ENCODE measurements at regions of chr12 and their contacts with region 1.

Region 1: DNA sequence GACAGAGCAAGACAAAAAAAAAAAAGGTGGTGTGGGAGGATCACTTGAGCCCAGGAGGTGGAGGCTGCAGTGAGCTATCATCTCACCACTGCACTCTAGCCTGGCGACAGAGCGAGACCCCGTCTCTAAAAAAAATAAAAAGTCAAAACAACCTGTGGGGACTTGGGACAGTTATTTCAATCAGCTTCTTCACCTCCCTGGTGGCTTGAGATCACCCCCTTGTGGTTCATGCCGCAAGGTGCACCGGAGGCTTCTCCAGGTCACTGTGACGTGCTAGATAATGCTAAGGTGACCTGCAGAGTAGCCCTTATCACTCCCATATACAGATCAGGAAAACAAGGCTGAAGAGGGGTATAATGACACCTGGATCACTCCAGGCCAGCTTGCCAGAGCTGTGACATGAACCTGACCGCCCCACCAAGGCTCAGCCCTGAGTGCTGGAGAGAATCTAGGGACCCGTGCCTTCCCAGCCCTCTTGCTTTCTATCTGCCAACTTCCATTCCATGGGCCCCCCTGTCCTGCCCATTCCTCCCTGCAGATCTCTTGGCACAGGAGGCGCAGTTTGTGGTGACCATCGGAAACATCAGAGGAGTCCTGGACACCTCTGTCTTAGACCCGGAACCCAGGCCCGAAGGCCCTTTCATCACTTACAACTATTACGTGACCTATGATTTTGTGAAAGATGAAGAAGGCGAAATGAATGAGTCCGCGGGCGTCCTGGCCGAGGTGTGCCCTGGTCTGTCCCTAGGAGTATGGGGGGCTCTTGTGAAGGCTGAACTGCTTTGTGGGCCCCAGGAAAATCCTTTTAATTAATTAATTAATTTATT is 8.1 kb downstream of the LRRC43 start:
- DNase-seq: peak in 1 of 5 donors; percentile 49
- ATAC-seq: peak; percentile 66 to 82 (median 72)
- H3K4me3 ChIP-seq: no peak overlapping the region
- H3K27ac ChIP-seq: no peak overlapping the region
- H3K4me1 ChIP-seq: no peaks in the 10 kb centered on the region
- H3K27me3 ChIP-seq: no peaks in the 10 kb centered on the region
- CTCF ChIP-seq: peak; percentile 48 to 72 (median 60)
- POLR2A ChIP-seq: no peak

Region 2: GRCh38 chr12:122051231-122051876 is 139.7 kb before region 1 on chr12:
- intact Hi-C with region 1: loop called in 3 of 10 experiments (anchors 5 to 10 kb)
- DNase-seq: peak in 4 of 5 donors; percentile 68 to 73 (median 72)
- ATAC-seq: peak; percentile 77 to 85 (median 80)
- H3K4me3 ChIP-seq: no peak overlapping the region
- H3K27ac ChIP-seq: peak overlapping the region; percentile 62 to 97 (median 84)
- H3K4me1 ChIP-seq: peaks cover 4 to 29% (median 19%) of the 10 kb centered on the region in 12 donors
- H3K27me3 ChIP-seq: no peaks in the 10 kb centered on the region
- CTCF ChIP-seq: peak in 1 of 12 donors; percentile 7
- POLR2A ChIP-seq: no peak

Region 3: GRCh38 chr12:122130150-122130549 is 60.9 kb before region 1 on chr12:
- intact Hi-C with region 1: loop called in 3 of 10 experiments (anchors 5 to 10 kb)
- DNase-seq: peak in 1 of 5 donors; percentile 33
- ATAC-seq: no peak
- H3K4me3 ChIP-seq: no peak overlapping the region
- H3K27ac ChIP-seq: no peak overlapping the region
- H3K4me1 ChIP-seq: peaks cover 0 to 24% (median 5%) of the 10 kb centered on the region in 12 donors
- H3K27me3 ChIP-seq: no peaks in the 10 kb centered on the region
- CTCF ChIP-seq: no peak
- POLR2A ChIP-seq: no peak

Region 4: DNA sequence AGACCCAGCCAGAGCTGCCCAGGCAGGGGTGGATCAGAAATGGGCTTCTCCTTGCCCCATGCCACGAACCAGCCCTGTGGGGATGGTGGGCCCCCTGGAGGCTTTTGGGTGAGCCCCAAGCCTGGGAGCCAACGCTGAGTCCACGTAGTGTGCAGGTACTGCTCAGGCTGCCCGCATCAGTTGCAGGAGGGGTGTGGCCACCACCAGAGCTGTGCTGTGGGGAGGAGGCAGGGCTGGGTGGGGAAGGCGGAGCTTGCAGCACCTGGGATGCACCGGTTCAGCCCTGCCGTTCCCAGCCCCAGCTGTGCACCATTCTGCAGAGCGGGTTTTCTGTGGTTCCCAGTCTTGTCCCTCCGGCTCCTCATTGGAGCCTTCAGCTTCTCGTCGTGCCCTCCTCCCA is 53.4 kb before region 1 on chr12:
- intact Hi-C with region 1: loop called in 3 of 10 experiments (anchors 5 to 10 kb)
- DNase-seq: no peak
- ATAC-seq: peak in 1 of 4 donors; percentile 8
- H3K4me3 ChIP-seq: no peak overlapping the region
- H3K27ac ChIP-seq: no peak overlapping the region
- H3K4me1 ChIP-seq: no peaks in the 10 kb centered on the region
- H3K27me3 ChIP-seq: no peaks in the 10 kb centered on the region
- CTCF ChIP-seq: no peak
- POLR2A ChIP-seq: no peak